HepG2 (cell line): ENCODE measurements at regions of chr22 and their contacts with region 1.

Region 1: DNA sequence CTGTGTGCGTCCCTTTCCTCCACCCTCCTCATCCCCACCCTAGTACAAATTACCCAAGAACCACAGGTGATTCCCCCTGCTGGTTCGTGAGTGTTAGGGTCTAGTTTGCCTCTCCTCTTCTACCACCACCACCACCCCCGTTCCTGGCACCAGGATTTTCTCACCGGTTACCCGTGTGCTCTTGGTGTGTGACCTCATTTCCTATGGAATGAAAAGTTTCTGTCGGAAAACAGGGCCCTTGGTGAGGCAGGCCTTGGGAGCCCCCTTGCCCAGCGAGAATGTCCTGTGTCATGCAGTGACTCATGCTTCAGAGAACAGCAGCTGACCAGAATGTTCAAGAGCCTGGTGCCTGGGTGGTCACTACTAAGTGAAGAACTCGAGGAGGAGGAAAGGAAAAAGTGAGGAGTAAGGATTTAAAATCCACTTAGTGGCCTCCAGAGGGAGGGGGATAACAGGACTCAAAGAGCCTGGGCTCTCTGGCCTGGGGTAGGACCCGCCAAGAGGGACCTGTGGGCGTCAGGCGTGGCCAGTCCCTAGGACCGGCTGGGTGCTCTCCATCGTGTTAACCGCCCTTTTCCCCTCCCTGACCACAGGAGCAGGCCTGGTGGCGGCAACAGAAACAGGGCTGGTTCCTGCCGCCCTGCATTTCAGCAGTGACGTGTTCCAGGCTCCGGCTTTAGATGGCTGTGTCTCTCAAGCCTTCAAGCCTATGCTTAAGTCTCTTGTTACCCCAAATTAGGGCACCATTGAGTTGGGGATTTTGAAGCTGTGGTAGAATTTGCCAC is 30.2 kb downstream of the C22orf31 start:
- DNase-seq: peak; percentile 93
- ATAC-seq: peak; percentile 74
- H3K4me3 ChIP-seq: peak overlapping the region; percentile 18 to 51 (median 36); a peak in 4 of 6 replicates
- H3K27ac ChIP-seq: peak overlapping the region; percentile 88
- H3K4me1 ChIP-seq: peaks cover 95% of the 10 kb centered on the region
- H3K27me3 ChIP-seq: no peaks in the 10 kb centered on the region
- CTCF ChIP-seq: no peak
- EP300 ChIP-seq: peak in 1 of 2 experiments; percentile 68; a peak in 2 of 4 replicates
- POLR2A ChIP-seq: 0 out of 4 replicates have a peak, but pooled peaks of 1 of the 2 experiments have one; percentile 25
- RAD21 ChIP-seq: no peak

Region 2: GRCh38 chr22:28882878-28883656 is 148.4 kb before region 1 on chr22 and contains the start of gene ZNRF3:
- CTCF ChIA-PET with region 1: no interaction called
- POLR2A ChIA-PET with region 1: interaction called, 16 read pairs
- in situ Hi-C with region 1: no loop called
- intact Hi-C with region 1: loop called (anchors 5 kb)
- DNase-seq: peak; percentile 86
- ATAC-seq: peak; percentile 79
- H3K4me3 ChIP-seq: peak within 1 kb of the TSS; percentile 97
- H3K27ac ChIP-seq: peak within 1 kb of the TSS; percentile 82
- H3K4me1 ChIP-seq: peaks cover 47% of the 10 kb centered on the region
- H3K27me3 ChIP-seq: no peaks in the 10 kb centered on the region; a peak in 1 of 5 replicates
- CTCF ChIP-seq: 0 out of 2 replicates have a peak, but pooled peaks have one; percentile 17
- EP300 ChIP-seq: peak in 1 of 2 experiments; percentile 47; a peak in 1 of 4 replicates
- POLR2A ChIP-seq: peak; percentile 61 to 88; a peak in 3 of 4 replicates
- RAD21 ChIP-seq: 0 out of 2 replicates have a peak, but pooled peaks have one; percentile 24
- total RNA-seq, gene ZNRF3: 17.6 and 36.7 TPM in 2 replicates

Region 3: GRCh38 chr22:28923826-28924732 is 107.3 kb before region 1 on chr22:
- CTCF ChIA-PET with region 1: no interaction called
- POLR2A ChIA-PET with region 1: interaction called, 44 read pairs
- in situ Hi-C with region 1: loop called (anchors 5 kb)
- intact Hi-C with region 1: loop called (anchors 2 kb)
- DNase-seq: peak; percentile 98
- ATAC-seq: peak; percentile 76
- H3K4me3 ChIP-seq: peak overlapping the region in 1 of 3 experiments; percentile 29; a peak in 2 of 6 replicates
- H3K27ac ChIP-seq: peak overlapping the region; percentile 96
- H3K4me1 ChIP-seq: peaks cover 99% of the 10 kb centered on the region
- H3K27me3 ChIP-seq: no peaks in the 10 kb centered on the region
- CTCF ChIP-seq: no peak
- EP300 ChIP-seq: peak; percentile 67 to 98; a peak in 3 of 4 replicates
- POLR2A ChIP-seq: no peak
- RAD21 ChIP-seq: peak; percentile 48; the same call in 1 of the 2 replicates

Region 4: DNA sequence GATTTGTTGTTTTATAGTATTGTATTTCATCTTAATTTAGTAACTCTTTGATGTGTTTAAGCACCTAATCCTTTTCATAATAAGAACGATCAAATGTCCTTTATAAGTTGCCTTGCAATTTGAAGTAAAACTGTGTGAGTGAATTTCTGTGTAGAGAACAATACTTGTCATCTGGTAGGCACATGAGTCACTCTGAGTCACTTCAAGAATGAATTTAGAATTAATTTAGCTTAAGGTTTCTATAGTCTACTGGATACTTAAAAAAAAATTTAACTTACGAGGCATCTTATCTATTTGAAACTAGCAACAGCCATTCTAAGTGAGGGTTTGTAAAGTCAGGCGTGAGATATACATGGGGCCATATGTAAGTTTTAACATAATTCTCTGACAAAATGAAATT is 54.8 kb before region 1 on chr22:
- CTCF ChIA-PET with region 1: no interaction called
- POLR2A ChIA-PET with region 1: interaction called, 26 read pairs
- in situ Hi-C with region 1: no loop called
- intact Hi-C with region 1: no loop called
- DNase-seq: no peak
- ATAC-seq: no peak
- H3K4me3 ChIP-seq: peak overlapping the region in 2 of 3 experiments; percentile 28 to 51; a peak in 3 of 6 replicates
- H3K27ac ChIP-seq: peak overlapping the region; percentile 87
- H3K4me1 ChIP-seq: peaks cover 88% of the 10 kb centered on the region
- H3K27me3 ChIP-seq: no peaks in the 10 kb centered on the region
- CTCF ChIP-seq: no peak
- EP300 ChIP-seq: no peak
- POLR2A ChIP-seq: no peak
- RAD21 ChIP-seq: no peak

Region 5: DNA sequence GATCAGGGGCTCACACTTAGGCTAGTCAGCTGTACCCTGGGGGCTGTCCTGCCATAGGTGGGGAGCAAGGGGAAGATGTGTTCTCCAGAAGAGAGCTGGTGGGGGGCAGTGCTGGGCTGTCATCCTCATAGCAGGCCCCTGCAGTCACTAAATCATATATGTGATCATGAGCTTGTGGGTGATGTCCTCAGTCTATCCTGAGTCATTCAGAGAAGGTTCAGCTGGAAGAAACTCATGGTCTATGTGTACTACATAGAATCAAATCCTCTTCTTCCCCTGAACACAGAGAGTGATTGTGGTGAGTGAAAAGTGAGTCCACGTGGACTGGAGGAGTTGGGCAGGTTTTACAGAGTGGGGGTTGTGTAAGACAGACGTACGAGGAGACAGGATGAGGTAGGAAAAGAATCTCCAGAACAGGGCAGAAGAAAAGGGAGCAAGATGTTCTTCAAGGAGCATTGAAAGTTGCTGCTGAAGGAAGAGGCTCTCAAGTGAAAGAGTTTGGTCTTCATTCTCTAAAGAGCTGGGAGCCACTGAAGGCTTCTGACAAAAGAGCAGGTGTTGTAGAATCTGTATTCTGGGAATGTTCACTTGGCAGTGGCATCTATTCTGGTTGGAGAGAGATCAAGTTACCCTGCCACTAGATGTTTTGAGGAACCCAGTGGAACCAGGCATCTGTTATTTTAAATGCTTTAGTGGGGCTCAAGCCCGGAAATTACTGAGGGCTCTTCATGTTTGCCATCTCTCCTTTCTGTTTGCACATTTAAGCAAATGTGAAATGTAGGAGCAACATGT is 38.7 kb before region 1 on chr22:
- CTCF ChIA-PET with region 1: no interaction called
- POLR2A ChIA-PET with region 1: no interaction called
- in situ Hi-C with region 1: no loop called
- intact Hi-C with region 1: loop called (anchors 1 kb)
- DNase-seq: no peak
- ATAC-seq: no peak
- H3K4me3 ChIP-seq: no peak overlapping the region
- H3K27ac ChIP-seq: peak overlapping the region; percentile 11
- H3K4me1 ChIP-seq: peaks cover 40% of the 10 kb centered on the region
- H3K27me3 ChIP-seq: no peaks in the 10 kb centered on the region
- CTCF ChIP-seq: no peak
- EP300 ChIP-seq: no peak
- POLR2A ChIP-seq: no peak
- RAD21 ChIP-seq: no peak

Region 6: DNA sequence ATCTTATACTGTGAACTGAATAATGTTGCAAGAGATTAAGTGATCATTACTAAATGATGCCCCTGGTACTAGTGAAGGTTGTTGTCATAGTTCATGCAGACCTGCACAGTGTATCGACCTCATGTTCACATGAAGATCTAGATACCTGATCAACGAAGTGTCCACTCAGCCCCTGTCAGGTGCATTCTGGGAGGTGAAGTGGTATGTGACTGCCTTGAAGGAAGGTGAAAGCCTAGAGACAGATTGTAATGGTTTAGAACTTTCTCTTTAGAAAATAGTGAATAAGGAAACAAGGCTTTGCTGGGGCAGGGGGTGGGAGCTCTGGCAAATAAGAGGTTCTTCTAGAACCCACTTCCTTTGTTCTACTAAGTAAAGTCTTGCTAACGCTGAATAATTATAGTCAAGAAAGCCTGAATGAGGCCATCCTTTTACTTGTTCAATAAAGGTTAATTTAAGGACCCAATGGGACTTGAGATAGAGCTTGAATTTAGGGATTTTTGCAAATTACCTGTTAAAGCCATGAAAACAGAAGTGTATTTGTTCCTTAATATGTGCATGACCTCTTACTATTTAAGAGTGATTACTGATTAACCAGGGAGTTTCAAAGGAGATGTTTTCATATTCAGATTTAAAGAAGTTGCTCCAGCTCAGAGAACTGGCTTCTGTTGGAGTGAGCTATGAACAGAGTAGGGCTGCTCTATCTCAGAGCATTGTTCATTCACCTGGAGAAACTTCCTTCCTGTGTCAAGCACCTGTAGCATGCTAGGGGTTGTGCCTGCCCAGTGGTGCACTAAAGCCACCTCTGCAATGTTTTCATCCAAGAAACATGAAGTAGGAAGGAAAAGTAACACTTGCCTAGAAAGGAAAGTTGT is 15.1 kb before region 1 on chr22:
- CTCF ChIA-PET with region 1: no interaction called
- POLR2A ChIA-PET with region 1: interaction called, 37 read pairs
- in situ Hi-C with region 1: no loop called
- intact Hi-C with region 1: no loop called
- DNase-seq: peak; percentile 48
- ATAC-seq: peak; percentile 67
- H3K4me3 ChIP-seq: no peak overlapping the region
- H3K27ac ChIP-seq: peak overlapping the region; percentile 43
- H3K4me1 ChIP-seq: peaks cover 100% of the 10 kb centered on the region
- H3K27me3 ChIP-seq: no peaks in the 10 kb centered on the region
- CTCF ChIP-seq: no peak
- EP300 ChIP-seq: no peak; a peak in 1 of 4 replicates
- POLR2A ChIP-seq: 0 out of 4 replicates have a peak, but pooled peaks of 1 of the 2 experiments have one; percentile 38
- RAD21 ChIP-seq: no peak